Activated naive CD4-positive, alpha-beta T cell treated with anti-CD3 and anti-CD28 coated beads for 36 hours (primary cell): ENCODE measurements at regions of chr7 and their contacts with region 1.

Region 1: DNA sequence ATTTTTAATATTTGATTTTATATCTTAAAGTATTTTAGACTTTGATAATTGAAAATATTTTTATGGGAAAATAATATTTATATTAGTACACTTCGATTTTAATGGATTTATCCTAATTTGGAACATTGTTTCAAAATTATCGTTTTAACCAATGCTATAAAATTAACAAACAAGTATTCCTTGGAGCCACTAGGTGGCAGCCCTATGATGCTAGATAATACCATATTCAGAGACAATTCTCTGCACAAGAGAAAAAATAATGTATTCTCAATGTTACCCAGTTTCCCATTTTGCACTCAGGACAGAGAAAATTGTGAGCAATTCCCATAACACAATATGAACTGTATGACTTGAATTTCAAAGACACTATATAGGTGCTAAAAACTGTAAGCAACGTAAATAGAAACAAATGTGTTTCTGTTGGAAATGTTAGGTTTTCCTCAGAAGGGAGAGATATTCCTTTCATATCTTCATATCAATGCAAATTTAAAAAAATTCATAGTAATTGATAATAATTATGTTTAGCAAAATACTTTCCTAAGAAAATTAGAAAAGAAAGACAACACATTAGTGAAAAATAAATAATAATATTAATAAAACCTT is 237.8 kb downstream of the SEMA3E start:
- DNase-seq: peak; percentile 9
- H3K4me3 Mint-ChIP-seq: no peak overlapping the region
- H3K27ac Mint-ChIP-seq: no peak overlapping the region
- H3K4me1 Mint-ChIP-seq: no peaks in the 10 kb centered on the region
- H3K27me3 Mint-ChIP-seq: no peaks in the 10 kb centered on the region

Region 2: DNA sequence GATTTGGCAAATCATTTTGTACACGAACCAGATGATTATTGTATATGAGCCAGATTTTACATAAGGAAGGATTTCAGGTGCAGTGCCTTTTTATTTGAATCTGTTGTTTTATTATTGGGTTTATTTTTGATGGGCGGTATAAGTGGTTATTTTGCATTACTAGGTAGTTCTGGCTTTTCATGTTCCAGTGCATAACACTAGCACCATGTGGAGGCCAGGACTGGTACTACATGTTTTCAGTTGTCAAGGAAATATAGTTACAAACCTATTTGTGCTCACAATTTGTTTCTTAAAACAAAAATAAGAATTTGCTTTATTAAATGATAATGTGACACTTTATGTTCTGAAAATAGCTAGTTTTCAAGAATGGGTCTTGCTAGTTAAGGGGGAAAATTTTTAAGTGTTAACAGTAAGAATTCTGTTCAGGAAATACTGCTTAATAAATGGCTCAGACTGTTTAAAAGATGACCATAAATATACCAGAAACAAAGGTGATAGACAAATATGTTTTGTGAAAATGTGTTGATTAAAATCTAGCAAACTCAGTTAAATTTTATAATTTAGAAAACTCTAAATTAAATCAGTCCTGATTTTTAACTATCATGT is 245.0 kb after region 1 on chr7:
- CTCF ChIA-PET with region 1: no interaction called
- intact Hi-C with region 1: loop called (anchors 1 kb)
- DNase-seq: peak; percentile 13
- H3K4me3 Mint-ChIP-seq: no peak overlapping the region
- H3K27ac Mint-ChIP-seq: no peak overlapping the region
- H3K4me1 Mint-ChIP-seq: no peaks in the 10 kb centered on the region
- H3K27me3 Mint-ChIP-seq: no peaks in the 10 kb centered on the region

Region 3: DNA sequence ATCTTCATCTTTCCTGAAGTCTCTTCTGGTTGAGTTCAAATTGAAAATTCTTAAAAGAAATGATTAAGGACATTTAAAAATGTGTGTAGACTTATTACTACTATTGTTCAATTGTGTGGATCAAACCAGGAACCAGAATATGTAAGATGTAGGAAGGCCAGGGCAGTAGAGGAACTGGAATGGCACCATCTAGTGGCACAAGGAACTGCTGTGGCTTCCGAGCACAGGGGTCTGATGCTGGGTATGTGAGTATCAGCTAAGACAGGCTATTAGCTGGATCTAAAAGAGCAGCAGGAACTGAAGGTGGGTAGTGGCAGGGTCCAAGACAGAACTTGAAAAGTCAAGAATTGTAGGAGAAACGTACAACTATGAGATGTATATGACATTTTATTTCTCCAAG is 536.2 kb after region 1 on chr7:
- CTCF ChIA-PET with region 1: no interaction called
- intact Hi-C with region 1: loop called (anchors 2 kb)
- DNase-seq: peak; percentile 19
- H3K4me3 Mint-ChIP-seq: no peak overlapping the region
- H3K27ac Mint-ChIP-seq: no peak overlapping the region
- H3K4me1 Mint-ChIP-seq: no peaks in the 10 kb centered on the region
- H3K27me3 Mint-ChIP-seq: peaks cover 2% of the 10 kb centered on the region